ENCODE measurements at regions of chr4 and their contacts with region 1.

Region 1: DNA sequence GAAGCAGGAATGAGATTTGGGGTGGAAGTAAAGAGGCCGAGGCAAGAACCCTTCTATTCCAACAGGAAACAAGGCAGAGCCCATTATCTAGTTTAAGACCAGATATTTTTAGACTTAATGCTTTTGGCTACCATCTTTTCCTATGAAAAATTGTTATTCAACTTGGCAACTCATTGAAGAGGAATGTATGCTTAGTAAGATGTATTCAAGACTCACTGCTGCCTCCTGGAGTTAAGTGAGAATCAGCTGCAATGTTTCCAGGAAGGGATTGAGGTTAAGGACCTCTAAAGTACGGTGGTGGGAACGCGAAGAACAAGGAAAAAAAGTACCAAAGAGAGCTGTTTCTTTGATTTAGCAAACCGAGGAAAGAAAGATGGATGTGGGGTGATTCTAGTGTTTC is 89.1 kb downstream of the RAPGEF2 start:
- DNase-seq: no peak
- ATAC-seq: no peak
- H3K4me3 ChIP-seq: no peak overlapping the region
- H3K4me3 Mint-ChIP-seq: no peak overlapping the region
- H3K27ac ChIP-seq: no peak overlapping the region
- H3K27ac Mint-ChIP-seq: no peak overlapping the region
- H3K4me1 ChIP-seq: no peaks in the 10 kb centered on the region
- H3K4me1 Mint-ChIP-seq: peaks cover 0 to 2% (median 0%) of the 10 kb centered on the region in 7 donors
- H3K27me3 ChIP-seq: no peaks in the 10 kb centered on the region
- H3K27me3 Mint-ChIP-seq: no peaks in the 10 kb centered on the region

Region 2: GRCh38 chr4:158856852-158857251 is 335.1 kb before region 1 on chr4:
- CTCF ChIA-PET with region 1: no interaction called
- POLR2A ChIA-PET with region 1: no interaction called
- intact Hi-C with region 1: loop called in 1 of 2 experiments (anchors 1 kb)
- DNase-seq: peak in 3 of 9 donors; percentile 3 to 16 (median 13)
- ATAC-seq: peak; percentile 79
- H3K4me3 ChIP-seq: no peak overlapping the region
- H3K4me3 Mint-ChIP-seq: no peak overlapping the region
- H3K27ac ChIP-seq: no peak overlapping the region
- H3K27ac Mint-ChIP-seq: no peak overlapping the region
- H3K4me1 ChIP-seq: no peaks in the 10 kb centered on the region
- H3K4me1 Mint-ChIP-seq: peaks cover 0 to 10% (median 0%) of the 10 kb centered on the region in 7 donors
- H3K27me3 ChIP-seq: no peaks in the 10 kb centered on the region
- H3K27me3 Mint-ChIP-seq: no peaks in the 10 kb centered on the region

Region 3: DNA sequence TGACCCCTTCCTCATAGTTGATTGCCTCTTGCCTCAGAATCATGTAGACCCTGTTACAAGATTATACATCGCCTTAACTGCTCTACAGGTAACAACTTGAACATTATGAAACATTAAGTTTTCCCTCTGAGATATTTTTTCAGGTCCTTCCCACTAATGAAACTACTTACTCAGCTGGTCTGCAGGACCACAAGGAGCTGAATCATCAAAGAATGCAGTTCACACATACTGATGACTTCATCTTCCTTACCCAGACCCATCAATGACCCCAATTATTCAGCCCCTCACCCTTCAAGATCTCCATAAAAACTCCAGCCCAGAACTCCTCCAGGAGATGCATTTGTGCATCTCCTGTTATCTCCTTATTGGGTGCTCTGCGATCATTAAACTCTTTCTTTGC is 631.8 kb after region 1 on chr4:
- CTCF ChIA-PET with region 1: no interaction called
- POLR2A ChIA-PET with region 1: no interaction called
- intact Hi-C with region 1: no loop called
- DNase-seq: no peak
- ATAC-seq: no peak
- H3K4me3 ChIP-seq: no peak overlapping the region
- H3K4me3 Mint-ChIP-seq: no peak overlapping the region
- H3K27ac ChIP-seq: no peak overlapping the region
- H3K27ac Mint-ChIP-seq: no peak overlapping the region
- H3K4me1 ChIP-seq: no peaks in the 10 kb centered on the region
- H3K4me1 Mint-ChIP-seq: no peaks in the 10 kb centered on the region
- H3K27me3 ChIP-seq: no peaks in the 10 kb centered on the region
- H3K27me3 Mint-ChIP-seq: no peaks in the 10 kb centered on the region

Measured in naive thymus-derived CD4-positive, alpha-beta T cell (primary cell).